PC-9 (cell line): ENCODE measurements at regions of chr1 and their contacts with region 1.

Region 1: DNA sequence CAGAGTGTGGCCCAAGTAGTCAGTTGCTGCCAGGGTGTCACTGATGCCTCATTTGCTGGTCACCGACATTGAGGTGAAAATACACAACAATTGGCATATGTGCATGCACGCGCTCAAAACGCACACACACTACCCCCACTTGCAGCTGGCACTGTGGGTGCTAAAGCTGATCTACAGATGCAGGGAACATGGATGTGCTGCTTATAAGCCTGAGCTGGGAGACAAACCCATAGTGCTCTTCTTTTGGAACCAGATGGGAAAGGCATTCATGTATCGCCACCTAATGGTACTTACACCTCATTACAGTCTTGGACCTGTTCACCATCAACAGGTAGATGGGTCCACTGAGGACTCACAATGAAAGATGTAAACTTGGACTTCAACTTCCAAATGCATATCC is 70.3 kb upstream of the CAMK1G start:
- DNase-seq: peak; percentile 17 to 44
- H3K4me3 ChIP-seq: no peak overlapping the region
- H3K27ac ChIP-seq: no peak overlapping the region
- H3K4me1 ChIP-seq: no peaks in the 10 kb centered on the region
- H3K27me3 ChIP-seq: peaks cover 14% of the 10 kb centered on the region
- CTCF ChIP-seq: peak; percentile 76

Region 2: DNA sequence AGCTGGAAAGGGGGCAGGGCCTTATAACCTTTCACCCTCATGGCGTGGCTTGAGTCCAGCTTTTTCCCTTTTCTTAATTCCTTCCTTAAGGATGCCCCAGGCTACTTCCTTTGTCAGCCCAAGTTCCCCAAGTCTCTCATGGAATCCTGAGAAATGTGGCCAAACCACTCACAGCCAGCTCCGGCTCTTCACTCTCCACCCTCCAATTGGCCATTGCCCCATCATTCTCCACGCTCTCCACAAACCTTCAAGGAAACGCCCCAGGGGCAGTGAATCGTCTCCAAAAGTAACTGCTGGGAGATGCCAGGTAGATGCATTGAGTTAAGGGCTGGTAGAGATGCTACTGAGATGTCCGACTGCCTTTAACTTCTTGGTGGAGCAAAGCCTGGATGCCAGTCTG is 1488.8 kb before region 1 on chr1:
- CTCF ChIA-PET with region 1: no interaction called
- POLR2A ChIA-PET with region 1: no interaction called
- intact Hi-C with region 1: loop called (anchors 5 kb)
- DNase-seq: peak; percentile 5 to 35
- H3K4me3 ChIP-seq: no peak overlapping the region
- H3K27ac ChIP-seq: no peak overlapping the region
- H3K4me1 ChIP-seq: no peaks in the 10 kb centered on the region
- H3K27me3 ChIP-seq: no peaks in the 10 kb centered on the region
- CTCF ChIP-seq: no peak